ENCODE measurements at regions of chr11 and their contacts with region 1.

Region 1: GRCh38 chr11:122189229-122189628 is 73.2 kb upstream of the BLID start:
- DNase-seq: peak; percentile 85
- H3K4me3 ChIP-seq: no peak overlapping the region
- H3K27ac ChIP-seq: peak overlapping the region; percentile 63
- H3K27me3 ChIP-seq: no peaks in the 10 kb centered on the region
- CTCF ChIP-seq: no peak

Region 2: GRCh38 chr11:122202951-122203456 is 13.8 kb after region 1 on chr11:
- CTCF ChIA-PET with region 1: interaction called, 20 read pairs
- POLR2A ChIA-PET with region 1: interaction called, 6 read pairs
- DNase-seq: peak; percentile 48
- H3K4me3 ChIP-seq: peak overlapping the region; percentile 70
- H3K27ac ChIP-seq: peak overlapping the region; percentile 79
- H3K27me3 ChIP-seq: no peaks in the 10 kb centered on the region
- CTCF ChIP-seq: peak; percentile 99

Region 3: DNA sequence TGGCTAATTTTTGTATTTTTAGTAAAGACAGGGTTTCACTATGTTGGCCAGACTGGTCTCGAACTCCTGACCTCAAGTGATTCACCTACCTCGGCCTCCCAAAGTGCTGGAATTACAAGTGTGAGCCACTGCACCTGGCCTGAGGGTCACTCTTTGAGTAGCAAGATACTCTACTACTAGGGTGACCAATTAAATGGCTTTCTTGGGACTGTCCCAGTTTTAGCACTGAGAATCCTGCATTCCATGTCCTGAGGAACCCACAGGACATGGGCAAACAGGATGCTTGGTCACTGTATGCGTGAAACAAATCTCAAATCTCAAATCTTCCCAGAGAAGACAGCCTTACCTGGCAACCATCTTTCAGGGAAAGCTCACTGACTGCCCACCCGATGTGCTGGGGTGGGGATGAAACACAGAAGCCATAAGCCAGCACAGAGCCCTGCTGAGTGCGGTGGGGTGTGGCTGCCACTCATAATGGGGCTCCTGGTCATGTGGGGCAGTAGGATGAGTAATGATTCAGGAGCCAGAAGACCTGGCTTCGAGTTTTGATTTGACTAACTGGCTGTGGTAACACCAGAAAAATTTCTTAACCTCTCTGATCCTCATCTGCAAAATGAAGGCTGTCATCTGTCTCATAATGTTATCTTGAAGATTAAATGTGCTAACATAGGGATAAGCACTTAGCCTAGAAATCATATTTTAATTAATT is 994.3 kb after region 1 on chr11:
- CTCF ChIA-PET with region 1: no interaction called
- POLR2A ChIA-PET with region 1: no interaction called
- DNase-seq: no peak
- H3K4me3 ChIP-seq: no peak overlapping the region
- H3K27ac ChIP-seq: no peak overlapping the region
- H3K27me3 ChIP-seq: no peaks in the 10 kb centered on the region
- CTCF ChIP-seq: no peak